ENCODE measurements at regions of chr12 and their contacts with region 1.

Region 1: DNA sequence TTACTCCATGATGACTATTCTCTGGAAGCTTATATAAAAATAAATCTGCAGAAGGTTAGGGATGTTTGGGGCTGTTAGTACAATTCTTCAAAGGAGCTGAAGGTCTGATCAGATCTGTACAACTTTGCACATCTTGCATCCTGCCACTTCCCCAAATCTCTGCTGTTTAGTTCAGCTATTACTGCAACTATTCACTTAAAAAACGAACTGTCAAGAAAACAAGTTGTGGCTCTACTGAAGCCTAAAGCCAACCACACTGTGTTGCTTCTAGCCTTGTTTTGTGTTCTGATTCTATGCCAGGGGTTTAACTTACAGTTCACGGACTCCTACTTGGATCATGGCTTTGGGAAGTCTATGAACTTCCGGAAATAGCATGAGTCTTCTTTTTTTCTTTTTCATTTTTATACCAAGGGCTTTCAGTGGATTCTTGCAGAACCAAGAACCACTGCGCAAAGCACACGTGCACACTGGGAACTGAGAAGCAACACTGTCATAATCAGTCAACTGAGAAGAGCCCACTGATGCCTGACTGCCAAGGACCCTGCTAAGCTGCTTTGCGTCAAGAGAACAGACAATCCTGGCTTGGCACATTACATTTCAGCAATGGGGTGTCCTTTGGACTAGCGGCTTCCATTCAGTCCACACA is 66.3 kb upstream of the EEA1 start:
- DNase-seq: no peak
- ATAC-seq: no peak
- H3K4me3 ChIP-seq: no peak overlapping the region
- H3K27ac ChIP-seq: no peak overlapping the region
- H3K4me1 ChIP-seq: no peaks in the 10 kb centered on the region
- H3K27me3 ChIP-seq: no peaks in the 10 kb centered on the region
- CTCF ChIP-seq: no peak

Region 2: DNA sequence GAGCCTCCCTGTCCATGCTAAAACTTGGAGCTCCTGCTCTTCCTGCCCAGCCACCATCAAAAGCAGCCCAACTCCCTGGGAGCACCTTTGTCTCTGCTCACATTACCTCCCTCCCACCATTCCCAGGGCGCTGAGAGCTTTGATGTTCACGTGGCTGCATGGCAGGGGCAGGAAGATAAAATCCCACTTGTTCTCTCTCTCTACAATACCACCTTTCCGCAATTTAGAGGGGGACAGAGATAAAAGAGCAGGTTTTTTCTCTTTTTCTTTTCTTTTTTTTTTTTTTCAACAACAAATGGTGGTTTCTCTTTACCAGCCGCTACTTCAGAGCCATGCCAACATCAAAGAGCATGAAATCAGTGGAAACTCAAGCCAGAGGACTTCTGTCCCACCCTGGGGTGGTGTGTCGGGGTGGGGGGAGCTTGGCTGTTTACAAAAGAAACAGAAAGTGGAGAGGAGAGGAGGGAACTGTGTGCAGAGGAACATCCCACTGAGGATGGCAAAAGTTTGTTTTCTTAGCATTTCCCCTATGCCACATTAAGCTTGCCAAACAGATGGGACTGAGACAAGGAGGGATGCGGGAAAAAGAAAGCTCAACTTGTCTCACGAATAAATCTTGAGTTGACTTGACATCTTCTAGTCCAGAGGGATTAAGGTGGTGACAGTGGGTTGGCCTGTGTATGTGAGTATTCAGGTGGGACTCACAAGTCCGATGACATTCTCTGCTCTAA is 278.6 kb after region 1 on chr12:
- intact Hi-C with region 1: loop called in 1 of 2 experiments (anchors 5 kb)
- DNase-seq: no peak
- ATAC-seq: peak in 1 of 4 donors; percentile 56
- H3K4me3 ChIP-seq: no peak overlapping the region
- H3K27ac ChIP-seq: no peak overlapping the region
- H3K4me1 ChIP-seq: peaks cover 5% of the 10 kb centered on the region
- H3K27me3 ChIP-seq: no peaks in the 10 kb centered on the region
- CTCF ChIP-seq: no peak

Measured in psoas muscle (tissue), 8 donors.